Heart right ventricle (tissue), 16 donors: ENCODE measurements at regions of chr2 and their contacts with region 1.

Region 1: GRCh38 chr2:122622934-122623333 is 867.5 kb downstream of the TSN start:
- DNase-seq: no peak
- ATAC-seq: no peak
- H3K4me3 ChIP-seq: no peak overlapping the region
- H3K27ac ChIP-seq: no peak overlapping the region
- H3K4me1 ChIP-seq: no peaks in the 10 kb centered on the region
- H3K27me3 ChIP-seq: no peaks in the 10 kb centered on the region
- CTCF ChIP-seq: no peak

Region 2: GRCh38 chr2:121028577-121028976 is 1594.4 kb before region 1 on chr2:
- intact Hi-C with region 1: loop called in 1 of 10 experiments (anchors 5 kb)
- DNase-seq: no peak
- ATAC-seq: no peak
- H3K4me3 ChIP-seq: no peak overlapping the region
- H3K27ac ChIP-seq: no peak overlapping the region
- H3K4me1 ChIP-seq: no peaks in the 10 kb centered on the region
- H3K27me3 ChIP-seq: peaks cover 0 to 34% (median 9%) of the 10 kb centered on the region in 7 donors
- CTCF ChIP-seq: no peak

Region 3: GRCh38 chr2:122205637-122206036 is 417.3 kb before region 1 on chr2:
- intact Hi-C with region 1: no loop called
- DNase-seq: no peak
- ATAC-seq: no peak
- H3K4me3 ChIP-seq: no peak overlapping the region
- H3K27ac ChIP-seq: no peak overlapping the region
- H3K4me1 ChIP-seq: peaks cover 0 to 6% (median 0%) of the 10 kb centered on the region in 9 donors
- H3K27me3 ChIP-seq: peaks cover 0 to 15% (median 0%) of the 10 kb centered on the region in 7 donors
- CTCF ChIP-seq: no peak

Region 4: DNA sequence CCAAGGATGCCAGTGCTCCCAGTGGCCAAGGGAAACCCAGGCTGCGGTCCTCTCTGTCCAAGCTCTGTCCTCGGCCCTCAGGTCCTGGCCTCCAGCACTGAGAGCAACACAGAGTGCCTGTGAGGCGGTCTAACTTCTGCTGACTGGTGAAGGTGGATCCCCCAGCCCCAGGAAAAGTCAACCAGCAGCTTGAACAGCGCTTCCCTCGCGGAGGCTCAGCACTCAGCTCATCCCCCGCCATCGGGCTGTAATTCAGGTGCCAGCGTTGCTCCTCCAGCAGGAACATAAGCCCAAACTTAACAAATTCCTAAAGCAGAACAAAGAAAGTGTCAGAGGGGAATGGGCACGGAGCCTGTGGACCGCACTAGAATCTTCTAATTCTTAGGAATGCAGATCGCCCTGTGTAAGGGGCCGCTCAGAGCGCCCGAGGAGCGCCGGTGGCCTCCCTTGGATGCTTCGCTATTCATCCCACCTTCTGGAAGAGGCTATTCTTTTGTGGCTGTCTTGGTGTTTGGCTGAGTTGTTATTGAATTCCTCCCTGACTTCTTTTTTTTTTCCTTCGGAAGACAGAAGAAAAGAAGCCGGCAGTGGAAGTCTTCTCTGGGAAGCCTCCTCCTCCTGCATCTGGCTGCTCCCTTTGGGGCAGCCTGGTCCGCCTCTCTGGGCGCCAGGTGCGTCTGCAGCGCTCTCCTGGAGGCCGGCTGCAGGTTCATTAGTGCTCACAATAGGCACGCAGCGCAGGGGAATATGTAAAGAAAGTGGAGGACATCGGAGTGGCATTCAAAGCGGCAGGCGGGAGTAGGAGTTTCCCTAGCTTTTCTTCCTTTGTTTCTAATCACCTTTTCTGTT is 38.1 kb after region 1 on chr2:
- intact Hi-C with region 1: no loop called
- DNase-seq: no peak
- ATAC-seq: peak in 2 of 8 donors; percentile 28 to 39
- H3K4me3 ChIP-seq: peak overlapping the region in 4 of 10 donors; percentile 2 to 20 (median 8)
- H3K27ac ChIP-seq: no peak overlapping the region
- H3K4me1 ChIP-seq: no peaks in the 10 kb centered on the region
- H3K27me3 ChIP-seq: peaks cover 0 to 28% (median 16%) of the 10 kb centered on the region in 7 donors
- CTCF ChIP-seq: no peak